ENCODE measurements at regions of chr14 and their contacts with region 1.

Region 1: GRCh38 chr14:92951912-92952471 is 29.0 kb downstream of the CHGA start:
- DNase-seq: peak; percentile 84
- ATAC-seq: peak; percentile 91
- H3K4me3 Mint-ChIP-seq: no peak overlapping the region
- H3K27ac Mint-ChIP-seq: peak overlapping the region; percentile 39; the same call in 1 of the 2 replicates
- H3K4me1 Mint-ChIP-seq: peaks cover 11% of the 10 kb centered on the region
- H3K27me3 Mint-ChIP-seq: no peaks in the 10 kb centered on the region
- CTCF ChIP-seq: peak; percentile 97

Region 2: GRCh38 chr14:92880869-92881289 is 71.1 kb before region 1 on chr14:
- CTCF ChIA-PET with region 1: interaction called, 12 read pairs
- POLR2A ChIA-PET with region 1: no interaction called
- DNase-seq: peak; percentile 55
- ATAC-seq: peak; percentile 90
- H3K4me3 Mint-ChIP-seq: peak overlapping the region; percentile 25
- H3K27ac Mint-ChIP-seq: no peak overlapping the region
- H3K4me1 Mint-ChIP-seq: peaks cover 22% of the 10 kb centered on the region
- H3K27me3 Mint-ChIP-seq: peaks cover 4% of the 10 kb centered on the region
- CTCF ChIP-seq: peak; percentile 26; the same call in 1 of the 2 replicates

Region 3: GRCh38 chr14:92922883-92923743 is 28.9 kb before region 1 on chr14 and contains the start of gene CHGA:
- CTCF ChIA-PET with region 1: no interaction called
- POLR2A ChIA-PET with region 1: no interaction called
- DNase-seq: peak; percentile 86
- ATAC-seq: peak; percentile 84
- H3K4me3 Mint-ChIP-seq: peak within 1 kb of the TSS; percentile 86
- H3K27ac Mint-ChIP-seq: no peak within 1 kb of the TSS
- H3K4me1 Mint-ChIP-seq: peaks cover 23% of the 10 kb centered on the region
- H3K27me3 Mint-ChIP-seq: peaks cover 78% of the 10 kb centered on the region
- CTCF ChIP-seq: no peak
- total RNA-seq, gene CHGA: 8.5 to 17.2 TPM (median 17.1 TPM) in 3 replicates

Region 4: DNA sequence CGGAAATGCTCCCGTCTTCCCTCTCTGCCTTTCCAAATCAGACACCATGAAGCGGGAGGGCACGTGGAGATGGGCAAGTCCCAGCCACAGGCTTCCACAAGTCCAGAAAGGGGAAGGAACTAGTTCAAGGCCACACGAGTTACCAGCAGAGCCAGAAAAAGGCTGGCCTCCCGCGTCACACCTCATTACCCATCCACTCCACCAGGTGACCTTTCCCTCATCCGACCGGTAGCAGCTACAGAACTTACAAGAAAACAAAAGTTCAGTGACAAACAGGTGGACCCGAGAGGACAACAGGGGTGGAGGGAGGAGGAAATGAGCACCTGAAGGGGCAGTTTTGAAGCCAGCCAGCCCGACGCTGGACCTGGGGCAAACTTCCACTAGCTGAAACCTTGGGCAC is 17.9 kb after region 1 on chr14:
- CTCF ChIA-PET with region 1: interaction called, 14 read pairs
- POLR2A ChIA-PET with region 1: no interaction called
- DNase-seq: no peak
- ATAC-seq: no peak
- H3K4me3 Mint-ChIP-seq: no peak overlapping the region
- H3K27ac Mint-ChIP-seq: peak overlapping the region; percentile 74; the same call in 1 of the 2 replicates
- H3K4me1 Mint-ChIP-seq: peaks cover 46% of the 10 kb centered on the region
- H3K27me3 Mint-ChIP-seq: no peaks in the 10 kb centered on the region
- CTCF ChIP-seq: no peak

Region 5: GRCh38 chr14:93137864-93138263 is 185.9 kb after region 1 on chr14:
- CTCF ChIA-PET with region 1: interaction called, 37 read pairs
- POLR2A ChIA-PET with region 1: no interaction called
- DNase-seq: peak; percentile 35
- ATAC-seq: peak; percentile 64
- H3K4me3 Mint-ChIP-seq: no peak overlapping the region
- H3K27ac Mint-ChIP-seq: no peak overlapping the region
- H3K4me1 Mint-ChIP-seq: peaks cover 7% of the 10 kb centered on the region; the same call in 1 of the 2 replicates
- H3K27me3 Mint-ChIP-seq: no peaks in the 10 kb centered on the region; the same call in 1 of the 2 replicates
- CTCF ChIP-seq: no peak

Region 6: GRCh38 chr14:93206793-93207467 is 254.9 kb after region 1 on chr14 and contains the starts of genes GON7 and UBR7:
- CTCF ChIA-PET with region 1: interaction called, 13 read pairs
- POLR2A ChIA-PET with region 1: no interaction called
- DNase-seq: peak; percentile 97
- ATAC-seq: peak; percentile 92
- H3K4me3 Mint-ChIP-seq: peak within 1 kb of the TSS; percentile 99
- H3K27ac Mint-ChIP-seq: peak within 1 kb of the TSS; percentile 99
- H3K4me1 Mint-ChIP-seq: peaks cover 14% of the 10 kb centered on the region
- H3K27me3 Mint-ChIP-seq: no peaks in the 10 kb centered on the region
- CTCF ChIP-seq: no peak
- total RNA-seq, gene GON7: 7.1 to 8.0 TPM (median 7.4 TPM) in 3 replicates
- total RNA-seq, gene UBR7: 21.1 to 28.9 TPM (median 24.0 TPM) in 3 replicates

Measured in WTC11 (cell line).